Dendritic cell treated with granulocyte-macrophage colony-stimulating factor and Interleukin-4, amounts not matched to agents 40 ng/mL and 50 ng/mL, for 4 days (primary cell): ENCODE measurements at regions of chr19 and their contacts with region 1.

Region 1: DNA sequence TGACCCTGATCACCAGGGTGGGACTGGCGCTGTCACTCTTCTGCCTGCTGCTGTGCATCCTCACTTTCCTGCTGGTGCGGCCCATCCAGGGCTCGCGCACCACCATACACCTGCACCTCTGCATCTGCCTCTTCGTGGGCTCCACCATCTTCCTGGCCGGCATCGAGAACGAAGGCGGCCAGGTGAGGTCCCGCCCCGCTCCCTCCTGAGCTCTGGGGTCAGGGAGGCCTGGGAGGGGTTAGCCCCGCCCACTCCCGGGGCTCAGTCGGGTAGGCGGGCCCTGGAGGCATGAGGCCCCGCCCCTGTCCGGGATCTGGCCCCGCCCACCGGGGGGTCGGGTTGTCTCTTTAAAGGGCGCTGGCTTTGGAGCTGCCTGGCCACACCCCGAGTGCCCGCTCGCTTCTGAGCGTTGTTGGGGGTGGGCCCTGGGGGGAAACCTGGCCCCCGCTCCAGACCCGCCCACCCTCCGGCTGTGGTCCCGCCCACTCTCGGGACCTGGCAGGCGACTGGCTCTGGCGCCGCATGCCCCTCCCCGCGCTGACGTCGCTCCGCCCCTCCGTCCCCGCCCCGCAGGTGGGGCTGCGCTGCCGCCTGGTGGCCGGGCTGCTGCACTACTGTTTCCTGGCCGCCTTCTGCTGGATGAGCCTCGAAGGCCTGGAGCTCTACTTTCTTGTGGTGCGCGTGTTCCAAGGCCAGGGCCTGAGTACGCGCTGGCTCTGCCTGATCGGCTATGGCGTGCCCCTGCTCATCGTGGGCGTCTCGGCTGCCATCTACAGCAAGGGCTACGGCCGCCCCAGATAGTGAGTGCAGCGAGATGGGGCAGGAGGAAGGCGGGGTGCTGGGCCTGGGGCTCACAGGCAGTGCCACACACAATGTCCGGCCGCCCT is 13.1 kb downstream of the DDX39A start:
- H3K4me3 Mint-ChIP-seq: no peak overlapping the region
- H3K27ac Mint-ChIP-seq: peak overlapping the region; percentile 46
- H3K4me1 Mint-ChIP-seq: peaks cover 58% of the 10 kb centered on the region
- H3K27me3 Mint-ChIP-seq: no peaks in the 10 kb centered on the region

Region 2: DNA sequence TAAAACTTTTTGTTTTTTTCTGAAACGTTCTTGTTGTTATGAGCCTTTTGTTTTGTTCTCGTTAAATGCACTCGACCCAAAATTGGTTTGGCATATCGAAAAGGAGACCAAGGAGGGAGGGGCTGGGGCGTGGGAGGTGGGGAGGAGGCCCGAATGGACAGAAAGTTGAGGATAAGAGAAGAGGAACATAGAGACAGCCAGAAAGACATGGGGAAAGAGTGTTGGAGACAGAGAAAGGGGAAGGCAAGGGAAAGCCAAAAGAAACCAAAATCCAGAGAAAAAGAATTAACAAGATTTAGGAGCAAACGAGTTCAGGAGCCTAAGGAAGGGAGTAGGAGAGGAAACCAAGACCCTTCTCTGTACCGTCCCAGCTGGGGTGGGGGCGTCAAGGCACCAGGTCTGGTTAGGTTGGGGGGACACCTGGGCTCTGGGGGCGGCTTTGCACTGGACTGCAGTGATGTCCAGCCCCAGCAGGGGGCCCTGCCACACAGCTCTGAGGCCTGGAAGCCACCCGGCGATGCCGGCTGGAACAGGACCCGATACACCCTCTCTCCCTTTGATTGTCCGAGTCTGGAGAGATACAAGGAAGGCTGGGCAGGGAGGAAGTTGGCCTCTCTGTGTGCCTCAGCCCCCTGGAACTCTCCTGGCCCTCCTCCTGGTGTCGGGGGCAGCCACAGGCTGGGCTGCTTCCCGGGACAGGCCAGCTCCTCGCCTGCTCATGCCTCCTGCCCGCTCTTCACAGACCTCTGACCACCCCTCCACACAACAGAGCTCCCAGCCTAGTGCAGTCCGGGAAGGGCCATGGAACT is 258.0 kb before region 1 on chr19:
- intact Hi-C with region 1: loop called (anchors 10 kb)
- H3K4me3 Mint-ChIP-seq: no peak overlapping the region
- H3K27ac Mint-ChIP-seq: peak overlapping the region; percentile 21
- H3K4me1 Mint-ChIP-seq: peaks cover 61% of the 10 kb centered on the region
- H3K27me3 Mint-ChIP-seq: no peaks in the 10 kb centered on the region

Region 3: DNA sequence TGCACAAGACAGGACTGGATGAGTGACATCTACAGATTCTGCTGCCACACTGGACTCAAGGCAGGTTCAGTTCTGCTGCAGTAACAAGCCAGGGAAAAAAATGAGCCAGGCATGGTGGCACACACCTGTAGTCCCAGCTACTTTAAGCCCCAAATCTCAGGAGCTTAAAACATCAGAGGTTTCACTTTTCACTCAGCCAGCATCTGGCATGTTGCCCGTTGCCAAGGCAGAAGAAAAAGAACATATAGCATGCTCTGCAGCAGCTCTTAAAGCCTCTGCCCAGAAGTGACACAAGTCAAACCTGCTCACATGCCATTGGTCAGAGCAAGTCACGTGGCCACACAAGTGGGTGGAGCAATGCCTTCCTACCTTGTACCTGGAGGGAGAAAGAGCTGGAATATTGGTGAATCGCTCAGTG is 39.5 kb before region 1 on chr19:
- intact Hi-C with region 1: loop called (anchors 5 kb)
- H3K4me3 Mint-ChIP-seq: peak overlapping the region; percentile 37
- H3K27ac Mint-ChIP-seq: peak overlapping the region; percentile 83
- H3K4me1 Mint-ChIP-seq: peaks cover 88% of the 10 kb centered on the region
- H3K27me3 Mint-ChIP-seq: peaks cover 2% of the 10 kb centered on the region

Region 4: GRCh38 chr19:14383661-14384555 is 22.1 kb before region 1 on chr19:
- intact Hi-C with region 1: loop called (anchors 2 kb)
- H3K4me3 Mint-ChIP-seq: peak overlapping the region; percentile 83
- H3K27ac Mint-ChIP-seq: peak overlapping the region; percentile 79
- H3K4me1 Mint-ChIP-seq: peaks cover 54% of the 10 kb centered on the region
- H3K27me3 Mint-ChIP-seq: no peaks in the 10 kb centered on the region